Common myeloid progenitor, CD34-positive (primary cell): ENCODE measurements at regions of chr14 and their contacts with region 1.

Region 1: DNA sequence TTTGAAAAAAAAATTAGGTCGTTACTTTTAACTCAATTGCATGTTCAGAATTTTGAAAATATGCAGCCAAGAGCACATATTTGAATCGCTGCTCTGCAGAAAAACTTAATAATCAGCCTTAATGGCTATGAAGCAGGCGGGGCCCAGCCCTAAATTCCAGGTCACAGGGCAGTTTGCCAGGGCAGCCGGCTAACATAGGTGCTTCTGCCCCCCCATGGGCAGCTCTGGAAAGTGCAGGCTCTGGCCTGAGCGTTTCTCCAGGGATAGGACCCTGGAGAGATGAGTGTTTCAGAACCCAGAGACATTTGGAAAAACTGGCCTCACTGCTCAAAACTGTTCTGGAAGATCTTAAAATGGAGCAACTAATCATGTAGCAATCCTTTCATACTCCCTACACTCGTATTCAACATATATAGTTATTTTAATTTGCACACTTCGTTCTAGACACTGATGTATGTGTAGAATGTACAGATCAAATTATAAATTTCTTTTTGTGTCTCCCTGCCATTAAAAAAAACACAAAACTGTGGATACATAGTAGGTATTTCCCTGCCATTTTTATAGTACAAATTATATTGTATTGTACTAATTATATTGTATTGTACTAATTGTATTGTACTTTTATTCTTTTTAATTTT is 26.0 kb upstream of the PTGR2 start:
- DNase-seq: peak; percentile 84 to 91 (median 88)
- H3K4me3 ChIP-seq: no peak overlapping the region
- H3K27ac ChIP-seq: no peak overlapping the region
- H3K4me1 ChIP-seq: peaks cover 0 to 12% (median 3%) of the 10 kb centered on the region in 4 experiments
- H3K27me3 ChIP-seq: no peaks in the 10 kb centered on the region

Region 2: DNA sequence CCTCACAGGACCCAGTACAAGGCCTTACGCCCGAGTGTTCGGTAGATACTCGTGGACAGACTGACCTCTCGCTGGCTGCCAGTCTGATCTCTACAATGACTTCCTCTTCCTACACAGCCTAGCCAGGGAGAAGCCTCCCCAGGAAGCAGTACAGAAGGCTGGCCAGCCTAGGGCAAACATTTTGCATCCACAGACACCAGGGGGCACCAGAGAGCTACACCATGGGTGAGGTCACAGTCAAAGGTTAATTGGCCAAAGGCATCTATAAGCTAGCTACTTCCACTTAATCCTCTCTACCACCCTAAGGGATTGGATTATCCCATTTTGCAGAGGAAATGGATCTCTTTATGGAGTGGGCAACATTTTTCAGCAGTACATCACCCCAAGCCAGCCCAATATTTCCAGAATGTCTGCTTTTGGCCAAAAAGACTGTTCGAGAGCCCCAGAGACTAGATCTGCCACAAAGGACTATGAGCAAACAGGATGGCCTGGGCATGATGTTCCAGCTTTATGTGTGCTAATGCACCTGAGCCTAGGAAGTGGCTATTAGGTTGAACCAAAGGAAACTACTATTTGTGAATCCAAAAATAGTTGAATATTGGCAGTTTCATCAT is 96.8 kb before region 1 on chr14:
- CTCF ChIA-PET with region 1: interaction called, 173 read pairs
- POLR2A ChIA-PET with region 1: no interaction called
- DNase-seq: peak; percentile 77 to 87 (median 78)
- H3K4me3 ChIP-seq: no peak overlapping the region
- H3K27ac ChIP-seq: peak overlapping the region in 1 of 2 experiments; percentile 52
- H3K4me1 ChIP-seq: peaks cover 0 to 33% (median 29%) of the 10 kb centered on the region in 4 experiments
- H3K27me3 ChIP-seq: no peaks in the 10 kb centered on the region

Region 3: GRCh38 chr14:73741386-73741875 is 84.2 kb before region 1 on chr14:
- CTCF ChIA-PET with region 1: interaction called, 12 read pairs
- POLR2A ChIA-PET with region 1: no interaction called
- DNase-seq: peak; percentile 96 to 99 (median 97)
- H3K4me3 ChIP-seq: peak overlapping the region in 6 of 7 experiments; percentile 38 to 68 (median 55)
- H3K27ac ChIP-seq: peak overlapping the region; percentile 87 to 99
- H3K4me1 ChIP-seq: peaks cover 23 to 78% (median 77%) of the 10 kb centered on the region in 4 experiments
- H3K27me3 ChIP-seq: no peaks in the 10 kb centered on the region

Region 4: DNA sequence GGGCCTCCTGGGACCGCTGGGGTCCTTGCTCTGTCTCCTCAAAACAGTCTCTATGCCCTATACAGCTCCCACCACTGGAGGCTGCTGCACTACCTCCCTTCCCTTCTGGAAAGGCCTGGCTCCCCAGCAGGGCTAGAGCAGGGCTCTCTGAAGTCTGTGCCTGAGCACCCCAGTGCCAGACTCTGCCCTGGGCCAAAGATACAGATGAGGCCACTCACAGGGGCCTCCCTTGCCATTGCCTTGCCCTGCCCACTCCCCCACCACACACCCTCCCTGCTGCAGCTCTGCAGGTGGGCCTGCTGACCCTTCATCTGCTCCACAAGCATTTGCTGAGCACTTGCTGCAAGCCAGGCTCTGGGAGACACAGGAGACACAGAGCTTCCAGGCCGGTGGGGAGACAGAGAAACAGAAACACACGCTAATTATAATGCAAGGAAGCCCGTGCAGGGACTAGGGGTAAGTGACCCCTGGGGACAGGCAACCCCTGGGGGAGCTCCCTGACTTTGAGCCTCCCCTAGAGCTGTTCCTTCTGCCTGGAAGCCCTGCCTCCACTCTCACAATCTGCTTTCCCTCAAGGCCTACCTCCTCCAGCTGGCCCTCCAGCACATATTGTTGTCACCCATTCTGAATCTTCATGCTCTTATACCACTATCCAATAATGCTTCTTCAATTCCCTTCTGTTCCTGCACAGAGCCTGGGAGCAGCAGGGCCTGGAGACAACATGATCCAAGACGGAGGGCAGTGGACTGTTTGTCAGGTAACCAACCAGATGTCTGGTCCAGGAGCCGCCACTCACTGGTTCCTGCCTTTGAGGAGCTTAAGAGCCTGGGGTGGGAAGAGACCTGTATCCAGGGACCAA is 78.9 kb before region 1 on chr14:
- CTCF ChIA-PET with region 1: interaction called, 12 read pairs
- POLR2A ChIA-PET with region 1: no interaction called
- DNase-seq: peak in 2 of 3 donors; percentile 43 to 44
- H3K4me3 ChIP-seq: peak overlapping the region in 4 of 7 experiments; percentile 14 to 51 (median 30)
- H3K27ac ChIP-seq: peak overlapping the region; percentile 87 to 99
- H3K4me1 ChIP-seq: peaks cover 35 to 100% (median 95%) of the 10 kb centered on the region in 4 experiments
- H3K27me3 ChIP-seq: no peaks in the 10 kb centered on the region

Region 5: GRCh38 chr14:73753959-73754882 is 71.4 kb before region 1 on chr14:
- CTCF ChIA-PET with region 1: interaction called, 10 read pairs
- POLR2A ChIA-PET with region 1: interaction called, 4 read pairs
- DNase-seq: peak; percentile 88 to 97 (median 97)
- H3K4me3 ChIP-seq: peak overlapping the region; percentile 20 to 84 (median 59)
- H3K27ac ChIP-seq: peak overlapping the region; percentile 99
- H3K4me1 ChIP-seq: peaks cover 37 to 98% (median 96%) of the 10 kb centered on the region in 4 experiments
- H3K27me3 ChIP-seq: no peaks in the 10 kb centered on the region

Region 6: GRCh38 chr14:73777401-73777800 is 48.3 kb before region 1 on chr14:
- CTCF ChIA-PET with region 1: interaction called, 18 read pairs
- POLR2A ChIA-PET with region 1: no interaction called
- DNase-seq: peak in 1 of 3 donors; percentile 55
- H3K4me3 ChIP-seq: no peak overlapping the region
- H3K27ac ChIP-seq: no peak overlapping the region
- H3K4me1 ChIP-seq: peaks cover 2 to 38% (median 21%) of the 10 kb centered on the region in 4 experiments
- H3K27me3 ChIP-seq: no peaks in the 10 kb centered on the region

Region 7: GRCh38 chr14:73785873-73786695 is 39.6 kb before region 1 on chr14:
- CTCF ChIA-PET with region 1: interaction called, 10 read pairs
- POLR2A ChIA-PET with region 1: no interaction called
- DNase-seq: peak; percentile 82 to 93 (median 91)
- H3K4me3 ChIP-seq: peak overlapping the region; percentile 74 to 91 (median 85)
- H3K27ac ChIP-seq: peak overlapping the region; percentile 71 to 94
- H3K4me1 ChIP-seq: peaks cover 30 to 75% (median 51%) of the 10 kb centered on the region in 4 experiments
- H3K27me3 ChIP-seq: no peaks in the 10 kb centered on the region